ENCODE measurements at regions of chr7 and their contacts with region 1.

Region 1: DNA sequence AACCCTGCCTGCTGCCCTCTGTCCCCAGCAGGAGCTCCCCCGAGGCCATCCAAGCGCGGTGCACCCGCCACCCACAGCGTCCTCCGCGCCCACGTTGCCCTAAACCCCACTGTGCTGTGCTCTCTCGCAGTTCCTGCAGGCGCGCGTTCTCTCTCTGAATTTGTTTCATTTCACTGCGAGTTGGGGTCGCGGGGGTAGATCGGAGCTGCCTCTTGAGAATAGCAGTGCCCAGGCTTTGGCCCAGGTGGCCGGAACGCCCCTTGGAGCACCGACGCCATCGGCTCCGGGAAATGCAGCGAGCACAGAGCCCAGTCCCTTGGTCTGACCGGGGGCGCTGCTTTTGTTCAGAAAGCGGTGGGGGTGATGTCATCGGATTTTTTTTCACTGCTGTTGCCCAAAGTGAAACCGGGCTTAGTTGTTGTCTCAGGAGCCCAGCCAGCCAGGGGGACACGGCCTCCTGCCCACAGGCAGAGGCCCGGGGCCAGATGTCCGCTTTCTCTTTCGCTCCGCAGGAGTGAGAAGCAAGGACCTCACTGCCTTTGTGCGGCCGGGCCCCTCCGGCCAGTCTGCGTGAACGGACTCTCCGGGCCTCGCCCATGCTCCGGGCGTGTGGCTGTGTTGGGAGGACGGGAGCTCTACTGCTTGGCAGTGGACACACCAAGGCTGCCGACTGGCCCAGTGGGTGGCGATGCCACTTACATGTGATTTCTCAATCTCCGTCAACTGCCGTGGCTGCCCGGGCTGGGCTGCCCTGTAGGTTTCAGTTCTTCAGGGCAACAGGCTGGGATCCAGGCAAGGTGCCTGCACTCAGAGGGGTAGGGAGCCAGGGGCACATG is 43.1 kb downstream of the FOXK1 start:
- DNase-seq: peak; percentile 74
- ATAC-seq: peak; percentile 84
- H3K4me3 ChIP-seq: peak overlapping the region; percentile 65 to 74 (median 71)
- H3K27ac ChIP-seq: peak overlapping the region; percentile 75
- H3K4me1 ChIP-seq: peaks cover 28% of the 10 kb centered on the region
- H3K27me3 ChIP-seq: no peaks in the 10 kb centered on the region
- CTCF ChIP-seq: peak; percentile 31; the same call in 1 of the 2 replicates
- EP300 ChIP-seq: no peak
- POLR2A ChIP-seq: peak in 1 of 2 experiments; percentile 61; a peak in 1 of 4 replicates
- RAD21 ChIP-seq: no peak

Region 2: DNA sequence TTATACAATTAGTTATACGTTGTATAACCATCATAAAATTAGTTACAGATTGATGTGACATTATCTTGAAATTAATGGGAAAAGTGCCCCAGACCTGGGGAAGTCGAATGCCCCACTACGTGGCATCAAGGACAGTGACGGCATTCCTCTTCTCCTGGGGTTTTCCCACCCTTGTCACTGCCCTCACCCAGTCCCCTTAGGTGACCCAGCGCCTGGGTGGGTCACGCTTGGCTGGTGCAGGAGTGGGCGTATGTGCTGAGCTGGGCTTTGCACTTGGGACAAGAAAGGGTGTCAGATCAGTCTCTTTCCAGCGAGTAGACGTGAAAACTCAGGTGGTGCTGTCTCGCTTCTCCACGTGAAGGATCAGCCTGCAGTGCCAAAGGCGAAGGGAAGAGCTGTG is 35.6 kb before region 1 on chr7:
- CTCF ChIA-PET with region 1: no interaction called
- POLR2A ChIA-PET with region 1: no interaction called
- in situ Hi-C with region 1: no loop called
- intact Hi-C with region 1: no loop called
- DNase-seq: no peak
- ATAC-seq: no peak
- H3K4me3 ChIP-seq: no peak overlapping the region
- H3K27ac ChIP-seq: no peak overlapping the region
- H3K4me1 ChIP-seq: peaks cover 65% of the 10 kb centered on the region
- H3K27me3 ChIP-seq: no peaks in the 10 kb centered on the region
- CTCF ChIP-seq: no peak
- EP300 ChIP-seq: no peak
- POLR2A ChIP-seq: no peak
- RAD21 ChIP-seq: no peak

Region 3: GRCh38 chr7:4744391-4745264 is 19.4 kb after region 1 on chr7:
- CTCF ChIA-PET with region 1: no interaction called
- POLR2A ChIA-PET with region 1: interaction called, 10 read pairs
- in situ Hi-C with region 1: no loop called
- intact Hi-C with region 1: no loop called
- DNase-seq: peak; percentile 93
- ATAC-seq: peak; percentile 91
- H3K4me3 ChIP-seq: peak overlapping the region in 2 of 3 experiments; percentile 6 to 43; a peak in 3 of 6 replicates
- H3K27ac ChIP-seq: peak overlapping the region; percentile 84
- H3K4me1 ChIP-seq: peaks cover 65% of the 10 kb centered on the region
- H3K27me3 ChIP-seq: no peaks in the 10 kb centered on the region
- CTCF ChIP-seq: 0 out of 2 replicates have a peak, but pooled peaks have one; percentile 3
- EP300 ChIP-seq: peak in 1 of 2 experiments; percentile 73; a peak in 2 of 4 replicates
- POLR2A ChIP-seq: peak in 1 of 2 experiments; percentile 52; a peak in 2 of 4 replicates
- RAD21 ChIP-seq: no peak; the same call in 1 of the 2 replicates

Region 4: DNA sequence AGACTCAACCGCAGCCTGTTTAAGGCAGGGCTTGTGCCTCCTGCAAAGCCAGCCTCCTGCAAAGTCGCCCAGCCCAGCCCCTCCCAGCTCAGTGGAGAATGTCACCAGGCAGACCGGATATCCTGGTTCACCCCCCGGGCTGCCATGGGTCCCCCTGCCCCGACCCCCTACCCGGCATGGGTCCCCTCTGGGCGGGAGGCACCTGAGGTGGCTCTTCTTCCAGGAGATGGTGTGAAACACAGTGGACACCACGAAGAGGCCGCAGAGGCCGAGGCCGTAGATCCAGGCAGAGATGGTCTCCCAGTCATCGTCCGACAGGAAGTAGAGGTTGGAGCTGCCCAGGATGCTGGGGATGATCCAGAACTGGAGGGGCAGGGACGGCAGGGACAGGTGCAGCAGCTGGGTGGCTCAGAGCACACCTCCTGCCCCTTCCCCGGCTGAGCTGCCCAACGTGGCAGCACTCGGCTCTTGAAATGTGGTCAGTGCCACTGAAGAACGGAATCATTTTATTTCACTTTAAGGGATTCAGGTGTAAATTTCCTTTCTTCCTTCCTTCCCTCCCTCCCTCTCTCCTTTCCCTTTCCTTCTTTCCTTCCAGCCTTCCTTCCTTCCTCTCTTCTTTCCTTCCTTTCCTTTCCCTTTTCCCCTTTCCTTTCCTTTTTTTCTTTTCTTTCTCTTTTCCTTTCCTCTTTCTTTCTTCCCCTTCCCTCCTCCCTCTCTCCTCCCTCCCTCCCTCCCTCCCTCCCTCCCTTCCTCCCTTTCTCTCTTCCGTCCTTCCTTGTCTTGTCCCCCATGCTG is 194.9 kb after region 1 on chr7:
- CTCF ChIA-PET with region 1: no interaction called
- POLR2A ChIA-PET with region 1: no interaction called
- in situ Hi-C with region 1: no loop called
- intact Hi-C with region 1: no loop called
- DNase-seq: no peak
- ATAC-seq: no peak
- H3K4me3 ChIP-seq: no peak overlapping the region
- H3K27ac ChIP-seq: no peak overlapping the region
- H3K4me1 ChIP-seq: no peaks in the 10 kb centered on the region
- H3K27me3 ChIP-seq: peaks cover 3 to 7% of the 10 kb centered on the region in 2 experiments; a peak in 2 of 5 replicates
- CTCF ChIP-seq: no peak
- EP300 ChIP-seq: no peak
- POLR2A ChIP-seq: no peak
- RAD21 ChIP-seq: no peak

Measured in HepG2 (cell line).